ENCODE measurements at regions of chr17 and their contacts with region 1.

Region 1: GRCh38 chr17:10616502-10617119 is 40.5 kb downstream of the MYH3 start:
- DNase-seq: peak; percentile 79
- H3K4me3 ChIP-seq: no peak overlapping the region
- H3K27ac ChIP-seq: no peak overlapping the region
- H3K4me1 ChIP-seq: no peaks in the 10 kb centered on the region
- CTCF ChIP-seq: peak; percentile 92

Region 2: DNA sequence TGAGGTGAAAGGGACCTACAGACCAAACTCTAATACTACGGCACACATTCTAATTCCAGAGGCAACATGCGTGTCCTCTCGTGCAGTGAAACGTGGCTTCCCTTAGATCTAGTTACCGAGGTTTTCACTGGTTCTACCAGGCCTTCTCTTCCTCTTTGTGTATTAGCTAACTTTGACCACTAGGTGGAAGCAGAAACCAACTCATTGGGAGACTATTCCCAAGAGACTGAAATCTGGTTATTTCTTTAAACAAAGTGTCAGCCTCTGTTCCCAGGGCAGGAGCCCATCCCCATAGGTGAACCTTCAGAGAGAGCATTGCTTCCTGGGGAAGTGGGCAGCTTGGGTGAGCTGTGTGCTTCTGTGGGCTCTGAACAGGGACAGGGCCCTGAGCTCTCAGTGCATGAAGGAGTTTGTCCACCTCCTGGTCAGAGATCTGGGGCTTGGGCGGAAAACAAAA is 691.8 kb before region 1 on chr17:
- CTCF ChIA-PET with region 1: no interaction called
- POLR2A ChIA-PET with region 1: no interaction called
- intact Hi-C with region 1: loop called (anchors 5 kb)
- DNase-seq: peak; percentile 80
- H3K4me3 ChIP-seq: no peak overlapping the region
- H3K27ac ChIP-seq: no peak overlapping the region
- H3K4me1 ChIP-seq: no peaks in the 10 kb centered on the region
- CTCF ChIP-seq: peak; percentile 89

Region 3: GRCh38 chr17:10327640-10328039 is 289.0 kb before region 1 on chr17:
- CTCF ChIA-PET with region 1: no interaction called
- POLR2A ChIA-PET with region 1: no interaction called
- intact Hi-C with region 1: loop called (anchors 2 kb)
- DNase-seq: peak; percentile 79
- H3K4me3 ChIP-seq: no peak overlapping the region
- H3K27ac ChIP-seq: no peak overlapping the region
- H3K4me1 ChIP-seq: no peaks in the 10 kb centered on the region
- CTCF ChIP-seq: peak; percentile 91

Region 4: DNA sequence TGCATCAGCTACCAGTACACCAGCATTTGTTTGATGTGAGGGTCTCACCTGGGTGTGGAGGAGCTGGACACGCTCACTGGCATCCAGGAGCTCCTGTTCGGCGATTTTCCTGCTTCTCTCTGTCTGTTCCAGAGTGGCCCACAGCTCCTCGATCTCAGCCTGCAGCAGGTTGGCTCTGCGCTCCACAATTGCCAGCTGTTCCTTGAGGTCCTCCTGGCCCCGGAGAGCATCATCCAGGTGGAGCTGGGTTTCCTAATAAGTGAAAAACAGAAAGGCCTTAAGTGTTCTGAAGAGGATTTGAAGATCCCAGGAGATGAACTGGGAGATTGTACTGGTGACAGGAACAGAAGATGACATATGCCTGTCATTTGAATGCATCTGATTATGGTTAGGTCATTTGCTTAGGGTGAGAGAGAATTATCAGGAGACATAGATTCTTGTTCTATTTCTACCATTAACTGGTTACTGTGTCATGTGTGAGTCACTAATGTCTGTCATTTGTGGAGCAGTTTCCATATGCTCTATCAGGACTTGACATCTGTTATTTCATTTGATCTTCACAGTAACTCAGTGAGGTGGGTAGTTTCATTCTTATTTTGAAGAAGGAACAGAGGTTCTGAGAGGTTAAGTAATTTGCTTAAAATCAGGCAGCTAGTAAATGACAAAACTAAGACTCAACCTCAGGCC is 222.3 kb before region 1 on chr17:
- CTCF ChIA-PET with region 1: no interaction called
- POLR2A ChIA-PET with region 1: no interaction called
- intact Hi-C with region 1: no loop called
- DNase-seq: no peak
- H3K4me3 ChIP-seq: no peak overlapping the region
- H3K27ac ChIP-seq: no peak overlapping the region
- H3K4me1 ChIP-seq: no peaks in the 10 kb centered on the region
- CTCF ChIP-seq: no peak

Measured in OCI-LY7 (cell line).